ENCODE measurements at regions of chr12 and their contacts with region 1.

Region 1: GRCh38 chr12:104371043-104371870 is 67.7 kb downstream of the EID3 start:
- DNase-seq: no peak

Region 2: DNA sequence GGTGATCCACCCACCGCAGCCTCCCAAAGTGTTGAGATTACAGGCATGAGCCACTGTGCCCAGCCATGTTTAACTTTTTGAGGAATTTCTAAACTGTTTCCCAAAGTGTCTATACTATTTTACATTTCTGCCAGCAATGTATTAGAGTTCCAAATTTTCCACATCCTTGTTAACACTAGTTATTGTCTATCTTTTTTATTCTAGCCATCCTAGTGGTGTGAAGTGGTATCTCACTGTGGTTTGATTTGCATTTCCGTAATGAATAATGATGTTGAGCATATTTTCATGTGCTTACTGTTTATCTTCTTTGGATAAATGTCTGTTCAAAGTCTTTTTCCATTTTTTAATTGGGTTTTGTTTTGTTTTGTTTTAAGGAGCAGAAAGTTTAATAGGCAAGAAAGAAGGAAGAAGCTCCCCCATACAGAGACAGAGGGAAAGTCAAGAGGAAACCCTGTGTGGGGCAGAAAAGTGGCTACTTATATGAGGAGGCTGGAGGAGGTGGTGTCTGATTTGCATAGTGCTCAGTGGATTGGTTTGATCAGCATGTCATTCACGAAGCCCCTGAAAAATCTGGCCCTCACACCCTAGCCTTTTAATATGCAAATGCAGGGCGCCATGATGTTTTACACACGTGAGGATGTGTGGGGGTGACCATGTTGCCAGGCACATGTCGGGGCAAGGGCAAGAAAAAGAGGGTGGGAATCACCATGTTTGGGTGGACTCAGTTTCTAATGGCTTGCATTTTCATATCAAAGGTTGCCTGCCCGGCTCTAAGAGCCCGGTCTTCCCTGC is 140.8 kb before region 1 on chr12:
- intact Hi-C with region 1: no loop called
- DNase-seq: no peak

Region 3: DNA sequence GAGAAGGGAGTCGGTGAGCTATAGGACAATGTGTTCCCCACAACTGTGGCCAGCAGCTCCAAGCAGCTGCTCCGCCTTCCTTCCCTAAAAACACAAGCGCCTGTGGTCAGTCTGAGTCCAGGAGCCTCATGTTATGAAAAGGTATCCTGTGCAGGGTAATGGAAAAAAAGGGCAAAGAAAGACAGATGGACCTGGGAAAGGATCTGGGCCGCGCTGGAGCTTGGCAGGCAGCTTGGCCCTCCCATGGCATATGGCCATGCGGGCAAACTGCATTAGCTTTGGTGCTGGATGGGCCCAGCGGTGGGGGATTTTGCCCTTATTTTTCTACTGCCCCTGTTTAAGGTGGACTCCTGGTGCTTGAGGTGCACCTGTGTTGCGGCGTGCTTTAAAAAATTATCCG is 61.8 kb after region 1 on chr12:
- intact Hi-C with region 1: no loop called
- DNase-seq: no peak

Region 4: GRCh38 chr12:105053116-105053572 is 681.9 kb after region 1 on chr12:
- intact Hi-C with region 1: loop called in 1 of 2 experiments (anchors 10 kb)
- DNase-seq: peak; percentile 90

Measured in posterior vena cava (tissue), 2 donors.